PC-9 (cell line): ENCODE measurements at regions of chr22 and their contacts with region 1.

Region 1: GRCh38 chr22:42313804-42314581 is 43.5 kb upstream of the TCF20 start:
- DNase-seq: peak; percentile 85 to 96
- H3K4me3 ChIP-seq: no peak overlapping the region
- H3K27ac ChIP-seq: peak overlapping the region; percentile 41
- H3K4me1 ChIP-seq: peaks cover 37% of the 10 kb centered on the region
- H3K27me3 ChIP-seq: no peaks in the 10 kb centered on the region
- CTCF ChIP-seq: peak; percentile 87

Region 2: GRCh38 chr22:41557401-41558240 is 756.4 kb before region 1 on chr22:
- CTCF ChIA-PET with region 1: interaction called, 12 read pairs
- POLR2A ChIA-PET with region 1: no interaction called
- intact Hi-C with region 1: no loop called
- DNase-seq: no peak
- H3K4me3 ChIP-seq: no peak overlapping the region
- H3K27ac ChIP-seq: no peak overlapping the region
- H3K4me1 ChIP-seq: peaks cover 3% of the 10 kb centered on the region
- H3K27me3 ChIP-seq: no peaks in the 10 kb centered on the region
- CTCF ChIP-seq: no peak

Region 3: DNA sequence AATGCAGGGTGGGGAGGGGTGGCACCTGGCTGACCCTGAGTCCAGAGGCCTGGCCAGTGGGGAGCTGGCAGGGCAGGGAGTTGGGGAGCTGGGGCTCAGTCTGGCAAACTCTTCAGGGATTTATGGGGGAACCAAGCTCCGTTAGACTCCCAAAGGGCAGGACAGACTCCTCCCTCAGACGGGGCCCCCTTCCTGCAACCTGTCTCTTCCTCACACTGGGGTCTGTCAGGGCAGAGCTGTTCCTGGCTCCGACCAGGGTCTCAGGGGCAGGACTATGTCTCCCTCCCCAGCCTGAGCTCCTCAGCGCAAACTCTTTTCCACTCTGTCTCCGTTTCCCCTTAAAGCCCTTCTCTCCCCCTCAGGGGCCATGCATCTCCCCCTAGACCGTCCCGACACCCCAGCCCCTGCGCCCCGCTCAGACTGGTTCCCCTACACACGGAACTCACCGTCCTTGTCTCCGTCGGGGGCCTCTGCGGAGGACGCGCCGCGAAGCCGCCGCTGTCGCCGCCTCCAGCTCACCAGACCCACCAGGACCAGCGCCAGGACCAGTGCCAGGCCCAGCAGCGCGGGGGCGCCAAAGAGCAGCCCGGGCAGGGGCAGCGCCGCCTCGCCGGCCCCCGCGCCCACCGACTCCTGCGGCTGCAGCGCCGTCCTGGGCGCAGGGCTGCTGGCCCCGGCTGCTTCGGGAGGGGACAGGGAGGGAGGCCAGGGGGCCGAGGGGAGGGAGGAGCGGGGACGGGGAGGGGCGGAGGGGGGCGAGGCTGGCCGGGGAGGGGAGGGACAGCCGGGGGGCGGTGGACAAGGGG is 388.1 kb before region 1 on chr22:
- CTCF ChIA-PET with region 1: no interaction called
- POLR2A ChIA-PET with region 1: no interaction called
- intact Hi-C with region 1: no loop called
- DNase-seq: peak in 1 of 2 experiments; percentile 78
- H3K4me3 ChIP-seq: peak overlapping the region; percentile 24; the same call in 1 of the 2 replicates
- H3K27ac ChIP-seq: no peak overlapping the region
- H3K4me1 ChIP-seq: no peaks in the 10 kb centered on the region
- H3K27me3 ChIP-seq: peaks cover 6% of the 10 kb centered on the region; the same call in 1 of the 2 replicates
- CTCF ChIP-seq: peak; percentile 80

Region 4: DNA sequence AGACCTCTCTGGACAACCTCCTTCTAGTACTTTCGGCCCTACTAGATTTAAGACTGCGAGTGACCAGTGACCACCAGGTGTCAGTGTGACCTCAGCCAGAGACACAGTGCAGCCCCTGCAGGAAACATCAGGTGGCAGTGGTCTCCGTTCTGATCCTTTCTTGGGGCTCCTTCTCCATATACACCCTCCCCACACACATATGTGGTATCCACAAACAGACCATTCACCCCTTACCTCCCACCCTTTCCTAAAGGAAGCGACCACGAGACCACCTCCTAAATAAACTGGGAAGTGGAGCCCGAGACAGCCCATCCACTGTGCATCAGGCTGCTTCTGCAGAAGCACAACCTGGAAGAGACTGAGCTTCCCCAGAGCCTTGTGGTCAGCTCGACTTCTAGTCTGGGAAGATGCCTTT is 144.9 kb before region 1 on chr22:
- CTCF ChIA-PET with region 1: no interaction called
- POLR2A ChIA-PET with region 1: no interaction called
- intact Hi-C with region 1: loop called (anchors 1 kb)
- DNase-seq: peak in 1 of 2 experiments; percentile 56
- H3K4me3 ChIP-seq: no peak overlapping the region
- H3K27ac ChIP-seq: no peak overlapping the region
- H3K4me1 ChIP-seq: no peaks in the 10 kb centered on the region
- H3K27me3 ChIP-seq: no peaks in the 10 kb centered on the region
- CTCF ChIP-seq: peak; percentile 93

Region 5: GRCh38 chr22:42229455-42230149 is 84.4 kb before region 1 on chr22:
- CTCF ChIA-PET with region 1: no interaction called
- POLR2A ChIA-PET with region 1: no interaction called
- intact Hi-C with region 1: no loop called
- DNase-seq: no peak
- H3K4me3 ChIP-seq: no peak overlapping the region
- H3K27ac ChIP-seq: no peak overlapping the region
- H3K4me1 ChIP-seq: no peaks in the 10 kb centered on the region
- H3K27me3 ChIP-seq: no peaks in the 10 kb centered on the region
- CTCF ChIP-seq: no peak

Region 6: GRCh38 chr22:42270512-42271417 is 43.2 kb before region 1 on chr22 and contains the start of gene TCF20:
- CTCF ChIA-PET with region 1: interaction called, 4 read pairs
- POLR2A ChIA-PET with region 1: interaction called, 3 read pairs
- intact Hi-C with region 1: loop called (anchors 1 kb)
- DNase-seq: peak; percentile 51 to 69
- H3K4me3 ChIP-seq: peak within 1 kb of the TSS; percentile 97
- H3K27ac ChIP-seq: peak within 1 kb of the TSS; percentile 82
- H3K4me1 ChIP-seq: peaks cover 18% of the 10 kb centered on the region
- H3K27me3 ChIP-seq: no peaks in the 10 kb centered on the region
- CTCF ChIP-seq: no peak
- total RNA-seq, gene TCF20: 79.1 and 85.1 TPM in 2 replicates